Pancreas (tissue), 10 donors: ENCODE measurements at regions of chr19 and their contacts with region 1.

Region 1: GRCh38 chr19:16247353-16248182 is 49.9 kb downstream of the AP1M1 start:
- DNase-seq: peak; percentile 68 to 98 (median 88)
- ATAC-seq: peak; percentile 93 to 97 (median 96)
- H3K4me3 ChIP-seq: no peak overlapping the region
- H3K27ac ChIP-seq: no peak overlapping the region
- H3K4me1 ChIP-seq: no peaks in the 10 kb centered on the region
- H3K27me3 ChIP-seq: no peaks in the 10 kb centered on the region
- CTCF ChIP-seq: peak; percentile 80 to 89 (median 86)

Region 2: GRCh38 chr19:16324384-16325160 is 77.0 kb after region 1 on chr19 and contains the start of gene KLF2:
- intact Hi-C with region 1: no loop called
- DNase-seq: peak; percentile 84 to 95 (median 90)
- ATAC-seq: peak; percentile 84 to 94 (median 89)
- H3K4me3 ChIP-seq: peak within 1 kb of the TSS; percentile 35 to 72 (median 46)
- H3K27ac ChIP-seq: peak within 1 kb of the TSS; percentile 68 to 76 (median 72)
- H3K4me1 ChIP-seq: no peaks in the 10 kb centered on the region
- H3K27me3 ChIP-seq: no peaks in the 10 kb centered on the region
- CTCF ChIP-seq: no peak
- total RNA-seq, gene KLF2: 3.1 to 12.0 (median 5.8) TPM

Region 3: GRCh38 chr19:16371540-16371986 is 124.0 kb after region 1 on chr19:
- intact Hi-C with region 1: loop called in 1 of 3 experiments (anchors 10 kb)
- DNase-seq: no peak
- ATAC-seq: peak in 3 of 4 donors; percentile 59 to 71 (median 60)
- H3K4me3 ChIP-seq: no peak overlapping the region
- H3K27ac ChIP-seq: no peak overlapping the region
- H3K4me1 ChIP-seq: peaks cover 0 to 3% (median 0%) of the 10 kb centered on the region in 3 donors
- H3K27me3 ChIP-seq: no peaks in the 10 kb centered on the region
- CTCF ChIP-seq: no peak

Region 4: DNA sequence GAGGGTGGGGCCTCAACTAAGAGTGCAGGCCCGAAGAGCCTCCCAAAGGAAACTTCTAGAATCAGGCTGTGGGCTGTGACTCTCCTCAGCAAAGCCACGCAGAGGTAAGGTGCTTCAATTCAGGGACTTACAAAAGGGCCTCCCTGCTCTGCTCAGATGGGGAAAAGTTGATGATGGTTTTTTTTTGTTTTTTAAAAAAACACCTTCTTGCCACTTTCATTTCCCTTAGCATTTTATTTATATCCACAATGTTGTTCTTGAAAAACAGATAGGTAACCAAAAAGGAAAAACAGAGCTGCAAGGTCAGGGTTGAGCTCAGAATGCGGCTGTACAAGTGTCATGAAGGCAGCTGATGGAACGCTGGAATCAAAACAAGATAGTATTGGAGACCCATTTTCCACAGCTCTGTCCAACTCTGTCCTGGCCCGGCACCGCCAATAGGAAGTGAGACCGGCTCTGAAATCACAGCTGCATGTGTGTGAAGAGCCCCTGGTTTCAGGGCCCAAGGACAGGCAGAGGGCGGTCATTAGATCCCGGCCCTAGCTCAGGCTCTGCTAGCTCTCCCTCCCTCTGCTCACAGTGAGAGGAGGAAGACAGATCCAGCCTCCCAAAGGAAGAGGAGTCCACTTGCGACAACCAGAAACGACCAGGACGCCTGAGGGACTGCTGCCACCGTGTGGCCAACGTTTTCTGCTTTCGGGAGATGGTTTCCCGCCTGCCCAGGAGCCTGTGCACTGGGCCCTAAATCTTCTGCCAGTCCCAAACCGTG is 135.4 kb after region 1 on chr19:
- intact Hi-C with region 1: loop called (anchors 5 to 10 kb)
- DNase-seq: peak; percentile 59 to 84 (median 72)
- ATAC-seq: peak; percentile 66 to 91 (median 86)
- H3K4me3 ChIP-seq: no peak overlapping the region
- H3K27ac ChIP-seq: peak overlapping the region in 2 of 4 donors; percentile 16 to 31
- H3K4me1 ChIP-seq: no peaks in the 10 kb centered on the region
- H3K27me3 ChIP-seq: no peaks in the 10 kb centered on the region
- CTCF ChIP-seq: peak in 3 of 4 donors; percentile 40 to 63 (median 52)